A549 (cell line): ENCODE measurements at regions of chr9 and their contacts with region 1.

Region 1: DNA sequence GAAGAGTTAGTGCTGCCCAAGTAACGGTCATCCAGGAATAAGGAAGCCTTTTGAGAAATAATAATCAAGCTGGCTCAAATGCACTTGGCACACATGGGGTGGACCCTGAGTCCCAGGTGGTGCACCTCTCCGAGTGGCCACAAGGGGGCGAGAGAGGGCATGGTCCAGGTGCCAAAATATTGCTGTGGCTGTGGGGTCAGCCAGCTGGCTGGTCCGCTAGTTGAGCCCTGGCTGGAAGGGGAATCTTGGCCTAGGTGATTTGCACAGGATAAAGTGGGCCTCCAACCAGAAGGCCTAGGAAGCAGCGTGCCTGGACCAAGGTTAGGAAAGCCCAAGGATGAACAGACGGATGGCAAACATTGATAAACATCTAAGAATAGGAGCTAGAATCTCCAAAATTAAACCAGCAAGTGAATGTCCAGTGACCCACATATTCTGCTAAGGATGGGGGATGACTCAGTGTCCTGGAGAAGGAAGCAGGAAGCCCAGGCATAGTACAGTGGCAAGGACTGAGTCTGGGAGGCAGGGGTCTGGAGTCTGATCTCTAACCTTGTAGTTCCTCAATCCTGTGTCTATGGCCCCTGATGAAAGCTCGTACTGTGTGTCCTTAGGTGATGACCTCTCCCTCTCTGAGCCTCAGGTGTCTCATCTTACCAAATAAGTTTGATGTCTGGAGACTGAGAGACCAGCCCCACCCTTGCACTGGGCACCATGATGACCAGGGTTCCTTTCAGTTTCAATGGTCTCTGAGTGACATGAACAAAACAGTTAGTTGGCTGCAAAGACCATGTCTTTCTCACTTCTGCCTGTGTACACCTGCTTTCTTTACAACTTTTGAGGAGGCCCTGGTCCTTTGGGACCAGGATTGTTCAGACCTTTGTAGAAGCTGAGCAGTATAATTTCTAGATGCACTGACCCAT is 19.2 kb upstream of the SHB start:
- DNase-seq: peak; percentile 49 to 78
- ATAC-seq: peak; percentile 73 to 90
- H3K4me3 ChIP-seq: no peak overlapping the region
- H3K27ac ChIP-seq: no peak overlapping the region
- H3K4me1 ChIP-seq: no peaks in the 10 kb centered on the region
- CTCF ChIP-seq: peak; percentile 82
- EP300 ChIP-seq: no peak
- POLR2A ChIP-seq: no peak
- RAD21 ChIP-seq: peak; percentile 79 to 83

Region 2: DNA sequence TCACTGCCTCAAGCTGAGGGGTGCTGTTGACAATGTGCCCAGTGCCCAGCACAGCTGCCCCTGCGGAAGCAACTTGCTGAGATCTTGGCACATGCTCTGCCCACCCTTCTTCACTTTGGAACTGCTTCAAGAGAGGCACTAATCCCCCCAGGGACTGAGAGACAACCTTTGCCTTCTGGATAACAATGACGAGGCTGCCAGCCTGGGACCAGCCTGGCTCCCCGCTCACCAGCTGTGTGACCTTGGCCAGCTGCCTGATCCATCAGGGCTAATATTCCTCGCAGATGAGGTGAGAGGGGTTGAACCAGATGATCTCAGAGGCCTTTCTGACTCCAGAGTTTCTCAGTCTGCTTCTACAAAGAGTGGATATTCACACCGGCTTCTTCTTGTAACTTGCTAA is 100.2 kb before region 1 on chr9:
- CTCF ChIA-PET with region 1: no interaction called
- POLR2A ChIA-PET with region 1: no interaction called
- DNase-seq: no peak
- ATAC-seq: no peak
- H3K4me3 ChIP-seq: no peak overlapping the region
- H3K27ac ChIP-seq: no peak overlapping the region
- H3K4me1 ChIP-seq: peaks cover 3% of the 10 kb centered on the region; the same call in 1 of the 3 replicates
- CTCF ChIP-seq: no peak
- EP300 ChIP-seq: no peak
- POLR2A ChIP-seq: no peak
- RAD21 ChIP-seq: no peak

Region 3: DNA sequence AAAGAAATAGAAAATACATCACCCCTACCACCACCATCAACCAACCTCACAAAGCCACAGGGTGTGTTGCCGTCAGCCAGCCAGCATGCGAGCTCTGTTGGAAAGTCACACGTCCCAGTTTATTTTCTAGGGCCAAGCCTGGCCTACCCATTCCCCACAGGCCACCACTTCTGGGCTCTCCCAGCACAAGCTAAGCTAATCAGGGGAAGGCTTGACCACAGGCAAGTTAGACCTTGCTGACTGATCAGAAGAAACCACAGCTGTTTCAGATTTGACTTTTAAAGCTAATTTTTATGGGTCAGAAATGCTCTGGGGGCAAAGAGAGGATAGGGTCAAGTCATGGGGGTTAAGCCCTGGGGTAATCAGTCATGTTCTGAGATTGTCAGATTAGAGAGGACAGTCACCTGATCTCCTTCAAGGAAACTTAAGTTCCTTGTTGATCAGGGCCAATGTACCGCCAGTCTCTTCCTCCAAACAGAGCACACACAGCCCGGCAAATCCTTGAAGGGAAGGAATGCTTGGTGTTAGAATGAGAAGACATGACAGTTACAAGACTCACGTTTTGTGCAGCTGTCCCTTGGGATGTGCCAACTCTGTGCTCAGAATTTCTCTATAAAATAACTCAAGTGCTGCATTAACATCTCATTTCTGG is 26.8 kb before region 1 on chr9:
- CTCF ChIA-PET with region 1: interaction called, 11 read pairs
- POLR2A ChIA-PET with region 1: no interaction called
- DNase-seq: no peak
- ATAC-seq: no peak
- H3K4me3 ChIP-seq: no peak overlapping the region
- H3K27ac ChIP-seq: peak overlapping the region in 1 of 2 experiments; percentile 81; a peak in 4 of 6 replicates
- H3K4me1 ChIP-seq: peaks cover 99% of the 10 kb centered on the region
- CTCF ChIP-seq: no peak
- EP300 ChIP-seq: no peak
- POLR2A ChIP-seq: no peak
- RAD21 ChIP-seq: no peak

Region 4: GRCh38 chr9:38141746-38142591 is 53.7 kb after region 1 on chr9:
- CTCF ChIA-PET with region 1: interaction called, 10 read pairs
- POLR2A ChIA-PET with region 1: no interaction called
- DNase-seq: peak in 1 of 2 experiments; percentile 22
- ATAC-seq: peak; percentile 51 to 74; a peak in 5 of 6 replicates
- H3K4me3 ChIP-seq: no peak overlapping the region
- H3K27ac ChIP-seq: peak overlapping the region in 1 of 2 experiments; percentile 30; a peak in 3 of 6 replicates
- H3K4me1 ChIP-seq: peaks cover 18% of the 10 kb centered on the region
- CTCF ChIP-seq: no peak
- EP300 ChIP-seq: no peak
- POLR2A ChIP-seq: no peak
- RAD21 ChIP-seq: no peak

Region 5: DNA sequence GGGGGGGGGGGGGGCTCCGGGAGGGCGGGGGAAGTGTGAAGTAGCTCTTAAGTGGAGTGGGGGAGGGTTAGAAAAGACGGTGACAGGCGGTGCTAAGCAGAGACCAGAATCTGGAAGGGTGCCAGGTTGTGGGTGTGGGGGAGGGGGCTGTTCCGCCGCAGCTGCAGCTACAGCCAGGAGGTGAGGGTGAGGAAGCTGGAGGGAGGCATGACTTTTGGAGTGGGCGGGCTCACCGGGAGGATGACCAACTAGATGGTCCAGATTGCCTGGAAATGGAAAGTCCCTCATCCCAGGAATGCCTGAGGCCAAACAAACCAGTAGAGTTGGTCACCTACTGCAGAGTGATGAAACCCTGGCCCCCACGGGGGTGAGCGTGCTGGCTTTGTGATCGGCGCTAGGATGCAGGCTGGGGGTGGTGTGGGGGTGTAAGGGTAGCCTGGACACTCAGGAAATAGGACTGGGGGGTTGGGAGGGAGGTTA is 138.8 kb after region 1 on chr9:
- CTCF ChIA-PET with region 1: interaction called, 12 read pairs
- POLR2A ChIA-PET with region 1: no interaction called
- DNase-seq: peak; percentile 80 to 92
- ATAC-seq: peak; percentile 93 to 97
- H3K4me3 ChIP-seq: peak overlapping the region; percentile 24; the same call in 1 of the 3 replicates
- H3K27ac ChIP-seq: peak overlapping the region; percentile 69 to 87
- H3K4me1 ChIP-seq: peaks cover 23% of the 10 kb centered on the region
- CTCF ChIP-seq: no peak
- EP300 ChIP-seq: peak in 1 of 2 experiments; percentile 79; a peak in 1 of 5 replicates
- POLR2A ChIP-seq: no peak
- RAD21 ChIP-seq: peak in 1 of 2 experiments; percentile 15; a peak in 1 of 5 replicates

Region 6: GRCh38 chr9:38339087-38339486 is 250.8 kb after region 1 on chr9:
- CTCF ChIA-PET with region 1: interaction called, 10 read pairs
- POLR2A ChIA-PET with region 1: no interaction called
- DNase-seq: no peak
- ATAC-seq: no peak; a peak in 1 of 6 replicates
- H3K4me3 ChIP-seq: no peak overlapping the region
- H3K27ac ChIP-seq: no peak overlapping the region
- H3K4me1 ChIP-seq: peaks cover 5% of the 10 kb centered on the region; the same call in 1 of the 3 replicates
- CTCF ChIP-seq: no peak
- EP300 ChIP-seq: no peak
- POLR2A ChIP-seq: no peak
- RAD21 ChIP-seq: no peak

Region 7: GRCh38 chr9:38401994-38402393 is 313.7 kb after region 1 on chr9:
- CTCF ChIA-PET with region 1: interaction called, 13 read pairs
- POLR2A ChIA-PET with region 1: no interaction called
- DNase-seq: no peak
- ATAC-seq: no peak
- H3K4me3 ChIP-seq: no peak overlapping the region
- H3K27ac ChIP-seq: no peak overlapping the region
- H3K4me1 ChIP-seq: no peaks in the 10 kb centered on the region
- CTCF ChIP-seq: no peak
- EP300 ChIP-seq: no peak
- POLR2A ChIP-seq: no peak
- RAD21 ChIP-seq: no peak